PC-9 (cell line): ENCODE measurements at regions of chr7 and their contacts with region 1.

Region 1: DNA sequence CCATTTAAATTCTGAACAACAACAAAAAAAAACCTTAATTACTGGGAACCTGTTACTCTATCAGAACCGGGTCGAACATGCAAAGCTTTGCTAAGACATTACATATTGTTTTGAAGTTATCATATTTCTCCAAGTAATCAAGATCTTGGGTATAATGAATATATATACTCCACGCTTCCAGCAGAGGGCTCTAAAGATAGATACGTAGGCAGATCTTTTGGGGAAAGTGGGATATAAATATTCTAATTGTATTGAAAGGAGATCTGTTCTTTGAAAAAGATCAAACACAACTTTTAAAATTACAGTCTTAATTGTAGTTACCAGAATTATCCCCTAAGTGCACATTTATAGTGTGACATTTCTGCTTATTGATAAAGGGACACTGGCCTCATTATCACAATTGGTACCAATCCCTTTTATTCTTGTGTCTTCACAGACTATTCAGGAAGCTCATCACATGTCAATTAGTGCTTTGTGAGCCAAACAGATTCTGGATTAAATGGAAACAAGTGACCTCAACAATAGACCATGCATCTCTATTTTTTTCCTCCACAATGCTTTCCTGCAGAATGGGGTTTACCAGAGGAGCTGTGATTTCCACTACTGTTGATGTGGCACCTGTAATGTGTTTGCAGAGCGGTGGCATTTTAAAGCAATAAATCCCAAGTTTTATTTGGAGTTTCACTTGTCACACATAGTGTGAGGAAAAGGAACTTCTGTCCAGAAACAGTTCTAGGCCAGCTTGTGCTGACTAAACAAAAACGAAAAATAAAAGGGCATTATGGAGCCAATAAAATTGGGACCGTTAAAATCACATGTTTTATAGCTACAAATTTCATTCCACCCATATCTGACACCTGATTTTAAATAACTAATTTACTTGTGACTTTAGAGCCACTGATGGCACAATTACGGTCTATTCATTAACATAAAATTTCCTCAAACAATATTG is 122.4 kb downstream of the CTTNBP2 start:
- DNase-seq: no peak
- H3K4me3 ChIP-seq: no peak overlapping the region
- H3K27ac ChIP-seq: no peak overlapping the region
- H3K4me1 ChIP-seq: no peaks in the 10 kb centered on the region
- H3K27me3 ChIP-seq: no peaks in the 10 kb centered on the region
- CTCF ChIP-seq: peak; percentile 68

Region 2: DNA sequence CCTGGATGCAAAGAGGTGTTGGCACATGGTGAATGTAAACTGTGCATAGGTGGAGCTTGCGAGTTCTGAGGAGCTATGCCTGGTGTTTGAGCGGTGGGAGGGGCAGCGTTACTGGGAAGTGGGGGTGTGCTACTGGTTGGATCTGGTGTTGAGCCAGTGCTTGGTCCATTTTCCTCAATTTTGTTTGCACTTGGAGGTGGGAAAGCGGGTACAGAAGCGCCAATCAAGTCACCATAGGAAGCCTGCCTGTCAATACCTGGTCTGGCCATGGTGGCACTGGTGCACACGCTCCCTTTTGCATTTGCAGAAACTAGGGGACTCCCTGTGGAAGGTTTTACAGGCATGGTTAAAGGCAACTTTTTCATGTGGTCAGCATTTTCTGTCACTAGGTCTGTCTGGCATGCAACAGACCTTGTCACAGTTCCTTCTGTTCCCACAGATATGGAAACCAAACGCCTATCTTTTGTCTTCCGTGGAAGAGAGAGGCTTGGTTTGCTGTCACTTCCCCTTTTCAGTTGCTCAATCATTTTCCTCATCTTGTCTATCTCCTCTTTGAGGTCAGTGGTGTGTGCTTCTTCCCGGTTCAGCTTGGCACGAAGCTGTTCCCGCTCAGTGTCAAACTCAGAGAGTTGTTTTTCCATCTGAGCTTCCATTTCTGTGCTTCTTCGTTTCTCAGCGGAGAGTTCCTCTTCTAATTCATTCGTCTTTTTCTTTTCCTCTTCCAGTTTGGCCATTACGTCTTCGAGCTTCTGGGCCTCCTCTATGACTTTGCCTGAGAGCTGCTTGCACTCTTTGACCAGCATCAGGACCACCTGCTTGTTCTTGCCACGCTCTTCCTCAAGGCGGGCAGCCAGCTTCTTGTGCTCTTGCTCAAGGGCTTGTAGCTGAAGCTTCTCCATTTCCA is 41.2 kb after region 1 on chr7:
- CTCF ChIA-PET with region 1: no interaction called
- POLR2A ChIA-PET with region 1: no interaction called
- intact Hi-C with region 1: no loop called
- DNase-seq: no peak
- H3K4me3 ChIP-seq: no peak overlapping the region
- H3K27ac ChIP-seq: no peak overlapping the region
- H3K4me1 ChIP-seq: no peaks in the 10 kb centered on the region
- H3K27me3 ChIP-seq: no peaks in the 10 kb centered on the region
- CTCF ChIP-seq: no peak

Region 3: DNA sequence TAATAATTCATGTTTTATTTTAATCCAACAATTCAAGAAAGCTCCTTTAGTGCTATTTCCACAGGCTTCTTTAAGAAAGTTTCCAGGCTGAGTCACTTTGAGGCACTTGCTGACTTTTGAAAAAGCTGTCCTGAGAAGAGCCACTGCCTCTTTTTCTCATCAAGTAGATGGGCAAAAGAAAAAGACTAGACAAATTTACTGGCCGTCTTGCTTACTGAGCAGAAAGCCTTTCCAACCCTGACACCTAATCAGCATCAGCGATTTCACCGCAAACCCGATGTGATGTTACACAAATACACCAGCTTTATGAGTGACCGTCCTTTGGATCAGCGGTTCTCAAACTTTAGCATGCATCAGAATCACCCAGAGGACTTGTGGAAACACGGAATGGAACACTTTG is 98.1 kb after region 1 on chr7:
- CTCF ChIA-PET with region 1: no interaction called
- POLR2A ChIA-PET with region 1: no interaction called
- intact Hi-C with region 1: no loop called
- DNase-seq: no peak
- H3K4me3 ChIP-seq: no peak overlapping the region
- H3K27ac ChIP-seq: no peak overlapping the region
- H3K4me1 ChIP-seq: no peaks in the 10 kb centered on the region
- H3K27me3 ChIP-seq: no peaks in the 10 kb centered on the region
- CTCF ChIP-seq: no peak

Region 4: GRCh38 chr7:117889611-117890010 is 138.7 kb after region 1 on chr7:
- CTCF ChIA-PET with region 1: no interaction called
- POLR2A ChIA-PET with region 1: no interaction called
- intact Hi-C with region 1: loop called (anchors 10 kb)
- DNase-seq: no peak
- H3K4me3 ChIP-seq: no peak overlapping the region
- H3K27ac ChIP-seq: no peak overlapping the region
- H3K4me1 ChIP-seq: no peaks in the 10 kb centered on the region
- H3K27me3 ChIP-seq: no peaks in the 10 kb centered on the region
- CTCF ChIP-seq: no peak

Region 5: GRCh38 chr7:117949232-117949631 is 198.3 kb after region 1 on chr7:
- CTCF ChIA-PET with region 1: no interaction called
- POLR2A ChIA-PET with region 1: no interaction called
- intact Hi-C with region 1: loop called (anchors 10 kb)
- DNase-seq: no peak
- H3K4me3 ChIP-seq: no peak overlapping the region
- H3K27ac ChIP-seq: no peak overlapping the region
- H3K4me1 ChIP-seq: 0 out of 2 replicates have a peak, but pooled peaks cover 7% of the 10 kb centered on the region
- H3K27me3 ChIP-seq: no peaks in the 10 kb centered on the region
- CTCF ChIP-seq: no peak

Region 6: DNA sequence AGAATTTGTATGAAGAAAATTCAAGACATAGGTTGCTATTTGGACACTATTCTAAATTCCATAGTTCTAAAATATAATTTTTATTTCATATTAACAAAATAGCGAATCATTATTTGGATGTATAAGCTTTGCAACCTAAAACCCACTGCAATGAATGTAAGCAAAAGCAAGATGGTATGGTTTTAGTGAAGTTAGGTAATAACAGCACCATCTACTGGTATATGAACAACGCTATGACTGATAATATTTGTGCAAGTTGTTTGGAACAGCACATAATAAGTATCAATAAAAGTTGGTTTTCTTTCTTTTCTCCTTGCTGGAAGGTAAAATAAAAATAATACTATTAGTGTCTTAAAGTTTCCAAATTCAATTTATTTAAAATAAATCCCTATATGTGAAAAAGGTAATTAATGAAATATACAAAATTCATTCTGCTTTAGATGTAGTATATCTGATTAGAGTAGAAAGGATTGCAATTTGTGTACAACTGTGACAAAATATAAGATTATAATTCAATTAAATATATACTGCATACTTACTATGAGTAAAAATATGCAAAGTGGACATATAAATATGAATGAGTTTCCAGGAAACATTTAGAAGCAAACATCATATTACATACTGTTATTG is 354.0 kb after region 1 on chr7:
- CTCF ChIA-PET with region 1: no interaction called
- POLR2A ChIA-PET with region 1: no interaction called
- intact Hi-C with region 1: loop called (anchors 2 kb)
- DNase-seq: no peak
- H3K4me3 ChIP-seq: no peak overlapping the region
- H3K27ac ChIP-seq: no peak overlapping the region
- H3K4me1 ChIP-seq: no peaks in the 10 kb centered on the region
- H3K27me3 ChIP-seq: no peaks in the 10 kb centered on the region
- CTCF ChIP-seq: peak; percentile 66

Region 7: GRCh38 chr7:118195837-118196474 is 445.1 kb after region 1 on chr7:
- CTCF ChIA-PET with region 1: no interaction called
- POLR2A ChIA-PET with region 1: no interaction called
- intact Hi-C with region 1: loop called (anchors 5 kb)
- DNase-seq: peak; percentile 48 to 49
- H3K4me3 ChIP-seq: no peak overlapping the region
- H3K27ac ChIP-seq: no peak overlapping the region
- H3K4me1 ChIP-seq: no peaks in the 10 kb centered on the region
- H3K27me3 ChIP-seq: no peaks in the 10 kb centered on the region
- CTCF ChIP-seq: peak; percentile 80